Activated CD8-positive, alpha-beta T cell treated with anti-CD3 and anti-CD28 coated beads for 36 hours (primary cell): ENCODE measurements at regions of chr13 and their contacts with region 1.

Region 1: DNA sequence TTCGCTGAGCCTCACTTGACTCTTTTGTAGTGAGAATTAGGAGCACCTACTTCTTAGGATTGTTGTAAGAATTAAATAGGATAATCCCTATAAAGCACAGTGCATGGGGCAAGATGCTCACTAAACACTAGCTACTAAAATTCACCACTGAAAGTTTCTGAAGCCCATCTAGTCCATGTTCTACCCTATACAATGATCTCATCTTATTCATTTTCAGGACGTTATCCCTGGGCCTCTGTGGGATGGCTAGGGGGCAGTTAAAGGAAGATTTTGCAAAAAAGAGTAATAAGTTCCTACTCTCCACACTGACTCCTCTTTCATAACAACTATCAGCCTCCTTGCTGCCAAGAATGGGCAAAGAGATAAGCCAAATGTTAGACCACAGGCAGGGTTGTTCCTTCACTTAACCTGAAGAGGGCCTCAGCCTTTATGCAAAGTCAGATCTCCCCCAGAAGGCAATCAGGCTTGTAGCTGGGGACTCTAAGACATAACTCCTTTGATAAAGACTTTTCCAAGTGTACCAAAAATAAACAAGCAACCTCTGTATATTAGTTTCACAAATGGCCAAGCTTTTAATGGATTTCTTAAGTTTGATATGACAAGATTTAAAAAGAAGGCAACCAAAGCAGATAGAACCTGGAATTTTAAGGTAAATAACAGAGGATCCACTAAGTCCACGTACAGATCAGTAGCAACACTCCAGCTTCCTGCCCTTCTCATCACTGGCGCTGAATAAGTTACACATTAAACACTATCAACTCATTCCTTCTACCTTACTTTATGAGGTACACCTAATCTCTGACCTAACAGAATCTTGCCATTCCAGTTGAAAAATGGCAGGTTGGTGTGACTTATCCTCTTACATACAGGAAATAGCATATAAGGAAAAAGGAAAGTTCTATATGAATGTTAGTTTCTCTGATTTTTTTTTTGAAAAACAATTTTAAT is 44.4 kb downstream of the ELF1 start:
- DNase-seq: peak; percentile 53
- ATAC-seq: peak; percentile 86
- H3K4me3 Mint-ChIP-seq: peak overlapping the region; percentile 49
- H3K27ac Mint-ChIP-seq: peak overlapping the region; percentile 83
- H3K4me1 Mint-ChIP-seq: peaks cover 87% of the 10 kb centered on the region
- H3K27me3 Mint-ChIP-seq: no peaks in the 10 kb centered on the region
- CTCF ChIP-seq: peak; percentile 54

Region 2: GRCh38 chr13:40946485-40946884 is 28.2 kb before region 1 on chr13:
- CTCF ChIA-PET with region 1: interaction called, 10 read pairs
- POLR2A ChIA-PET with region 1: no interaction called
- intact Hi-C with region 1: no loop called
- DNase-seq: no peak
- ATAC-seq: no peak
- H3K4me3 Mint-ChIP-seq: no peak overlapping the region
- H3K27ac Mint-ChIP-seq: peak overlapping the region; percentile 62
- H3K4me1 Mint-ChIP-seq: peaks cover 23% of the 10 kb centered on the region
- H3K27me3 Mint-ChIP-seq: no peaks in the 10 kb centered on the region
- CTCF ChIP-seq: no peak

Region 3: GRCh38 chr13:40992678-40993518 is 18.2 kb after region 1 on chr13:
- CTCF ChIA-PET with region 1: interaction called, 11 read pairs
- POLR2A ChIA-PET with region 1: interaction called, 3 read pairs
- intact Hi-C with region 1: no loop called
- DNase-seq: no peak
- ATAC-seq: no peak
- H3K4me3 Mint-ChIP-seq: no peak overlapping the region
- H3K27ac Mint-ChIP-seq: peak overlapping the region; percentile 82
- H3K4me1 Mint-ChIP-seq: peaks cover 74% of the 10 kb centered on the region
- H3K27me3 Mint-ChIP-seq: no peaks in the 10 kb centered on the region
- CTCF ChIP-seq: no peak

Region 4: DNA sequence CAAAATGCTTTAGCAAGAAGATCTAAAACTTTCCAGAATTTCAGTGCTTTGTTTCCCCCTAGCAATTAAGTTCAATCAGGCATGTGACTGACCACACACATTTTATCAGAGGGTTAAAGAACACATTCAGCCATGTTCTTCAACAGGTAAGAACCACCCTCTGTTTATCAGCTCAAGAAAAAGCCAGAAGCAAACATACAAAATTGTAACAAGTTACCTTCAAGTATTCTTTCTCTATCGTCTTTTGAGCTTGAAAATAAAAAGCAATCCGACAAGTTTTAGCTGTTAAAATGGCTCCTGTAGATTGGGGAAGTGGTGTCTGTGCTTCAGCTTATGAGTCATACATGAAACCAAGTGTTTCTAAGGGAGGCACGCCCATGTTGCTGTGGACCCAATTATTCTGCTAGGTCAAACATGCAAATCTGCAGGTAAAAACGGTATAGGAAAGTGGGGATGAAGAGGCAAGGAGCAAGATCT is 44.3 kb after region 1 on chr13 and contains the start of gene ELF1:
- CTCF ChIA-PET with region 1: interaction called, 30 read pairs
- POLR2A ChIA-PET with region 1: interaction called, 102 read pairs
- intact Hi-C with region 1: loop called (anchors 10 kb)
- DNase-seq: peak; percentile 76
- ATAC-seq: peak; percentile 88
- H3K4me3 Mint-ChIP-seq: peak within 1 kb of the TSS; percentile 91
- H3K27ac Mint-ChIP-seq: peak within 1 kb of the TSS; percentile 98
- H3K4me1 Mint-ChIP-seq: peaks cover 24% of the 10 kb centered on the region
- H3K27me3 Mint-ChIP-seq: no peaks in the 10 kb centered on the region
- CTCF ChIP-seq: no peak
- total RNA-seq, gene ELF1: 85.2 to 88.2 TPM